Natural killer cell (primary cell): ENCODE measurements at regions of chr6 and their contacts with region 1.

Region 1: DNA sequence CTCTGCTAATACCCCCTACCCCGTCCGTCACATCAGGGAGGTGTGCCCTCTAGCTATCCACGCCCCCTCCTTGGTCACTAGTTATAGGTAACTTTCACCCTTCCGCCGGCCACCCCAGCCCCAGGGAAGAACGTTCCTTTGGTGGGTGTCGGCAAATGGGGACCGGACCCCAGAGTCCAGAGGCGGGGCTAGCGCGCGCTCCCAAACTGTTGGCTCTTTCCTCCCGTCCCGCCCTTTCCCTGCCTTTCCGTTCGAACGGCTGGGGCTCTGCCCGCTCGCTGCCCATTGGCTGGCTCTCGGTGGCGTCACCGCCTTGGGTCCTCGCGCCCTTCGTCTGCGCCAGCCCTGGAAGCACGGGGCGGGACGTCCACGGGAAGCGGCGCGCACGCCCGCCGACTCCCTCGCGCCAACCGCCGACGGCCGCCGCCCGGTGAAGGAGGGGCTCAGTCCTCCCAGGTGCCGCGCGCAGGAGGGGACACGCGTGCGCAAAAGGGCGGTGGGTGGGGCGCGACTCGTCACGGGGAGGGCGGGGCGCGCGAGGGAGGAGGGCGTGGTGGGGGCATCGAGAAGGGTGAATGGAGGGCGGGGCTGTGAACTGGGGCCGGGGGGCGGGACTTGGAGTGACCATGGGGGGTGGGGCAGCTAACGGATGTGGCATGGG is 634 bp upstream of the PHF1 start:
- DNase-seq: peak; percentile 95 to 98
- ATAC-seq: peak; percentile 69 to 86 (median 74)
- H3K4me3 ChIP-seq: peak overlapping the region; percentile 84
- H3K4me3 Mint-ChIP-seq: peak overlapping the region; percentile 92
- H3K27ac ChIP-seq: peak overlapping the region; percentile 98
- H3K27ac Mint-ChIP-seq: peak overlapping the region; percentile 100
- H3K4me1 ChIP-seq: peaks cover 54% of the 10 kb centered on the region
- H3K4me1 Mint-ChIP-seq: peaks cover 38 to 48% of the 10 kb centered on the region in 2 donors
- H3K27me3 ChIP-seq: no peaks in the 10 kb centered on the region
- H3K27me3 Mint-ChIP-seq: no peaks in the 10 kb centered on the region
- CTCF ChIP-seq: no peak

Region 2: GRCh38 chr6:33323623-33323948 is 86.6 kb before region 1 on chr6:
- intact Hi-C with region 1: loop called (anchors 1 kb)
- DNase-seq: no peak
- ATAC-seq: no peak
- H3K4me3 ChIP-seq: peak overlapping the region; percentile 67
- H3K4me3 Mint-ChIP-seq: peak overlapping the region; percentile 99
- H3K27ac ChIP-seq: peak overlapping the region; percentile 85
- H3K27ac Mint-ChIP-seq: peak overlapping the region; percentile 98
- H3K4me1 ChIP-seq: peaks cover 46% of the 10 kb centered on the region
- H3K4me1 Mint-ChIP-seq: peaks cover 50 to 57% of the 10 kb centered on the region in 2 donors
- H3K27me3 ChIP-seq: no peaks in the 10 kb centered on the region
- H3K27me3 Mint-ChIP-seq: no peaks in the 10 kb centered on the region
- CTCF ChIP-seq: no peak

Region 3: DNA sequence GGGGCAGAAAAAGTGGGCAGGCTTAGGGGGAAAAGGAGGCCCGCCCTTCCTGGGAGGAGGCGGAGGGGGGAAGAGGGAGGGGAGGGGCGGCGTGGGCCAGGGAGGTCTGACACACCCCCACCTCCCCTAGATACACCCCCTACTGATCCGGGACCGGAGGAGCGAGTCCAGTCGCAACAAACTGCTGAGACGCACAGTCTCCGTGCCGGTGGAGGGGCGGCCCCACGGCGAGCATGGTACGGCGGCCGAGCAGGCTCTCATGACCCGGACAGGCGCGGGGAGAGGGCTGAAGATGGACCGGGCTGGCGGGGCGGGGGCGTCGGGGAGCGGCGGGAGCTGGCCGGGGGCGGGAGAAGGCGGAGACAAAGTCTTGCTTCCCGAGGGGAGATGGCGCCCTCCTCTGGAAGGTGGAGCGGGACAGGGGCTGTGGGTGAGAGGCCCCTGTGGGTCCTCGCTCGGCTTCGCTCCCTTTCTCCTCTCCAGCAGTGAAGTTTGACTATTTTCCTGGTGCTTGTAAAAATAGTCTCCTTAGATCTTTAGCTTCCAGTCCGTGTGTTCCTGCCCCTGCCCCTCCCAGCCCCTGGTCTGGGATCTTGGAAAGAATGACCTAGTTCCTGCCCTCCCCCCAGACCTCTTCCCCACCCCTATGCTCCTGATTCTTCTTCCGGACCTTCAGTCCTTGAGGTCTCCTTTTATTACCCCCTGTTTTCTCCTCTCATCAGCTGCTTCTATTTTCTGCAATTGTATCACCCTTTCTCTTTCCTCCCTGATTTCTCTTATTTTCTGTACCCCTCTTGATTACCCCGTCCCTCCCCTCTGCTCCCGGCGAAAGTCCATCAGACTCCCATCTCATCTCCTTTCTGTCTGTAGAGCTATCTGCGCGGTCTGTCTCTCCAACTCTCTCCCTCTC is 15.7 kb after region 1 on chr6:
- intact Hi-C with region 1: loop called (anchors 2 kb)
- DNase-seq: peak; percentile 69 to 89
- ATAC-seq: peak; percentile 50 to 76 (median 67)
- H3K4me3 ChIP-seq: peak overlapping the region; percentile 66
- H3K4me3 Mint-ChIP-seq: peak overlapping the region; percentile 90
- H3K27ac ChIP-seq: peak overlapping the region; percentile 89
- H3K27ac Mint-ChIP-seq: peak overlapping the region; percentile 88 to 92
- H3K4me1 ChIP-seq: peaks cover 59% of the 10 kb centered on the region
- H3K4me1 Mint-ChIP-seq: peaks cover 59 to 77% of the 10 kb centered on the region in 2 donors
- H3K27me3 ChIP-seq: no peaks in the 10 kb centered on the region
- H3K27me3 Mint-ChIP-seq: no peaks in the 10 kb centered on the region
- CTCF ChIP-seq: peak; percentile 42

Region 4: GRCh38 chr6:33570806-33571636 is 160.8 kb after region 1 on chr6:
- intact Hi-C with region 1: loop called (anchors 1 kb)
- DNase-seq: peak; percentile 83 to 97
- ATAC-seq: peak; percentile 85 to 94 (median 85)
- H3K4me3 ChIP-seq: peak overlapping the region; percentile 75
- H3K4me3 Mint-ChIP-seq: peak overlapping the region; percentile 94
- H3K27ac ChIP-seq: peak overlapping the region; percentile 93
- H3K27ac Mint-ChIP-seq: peak overlapping the region; percentile 99 to 100
- H3K4me1 ChIP-seq: peaks cover 24% of the 10 kb centered on the region
- H3K4me1 Mint-ChIP-seq: peaks cover 20 to 27% of the 10 kb centered on the region in 2 donors
- H3K27me3 ChIP-seq: no peaks in the 10 kb centered on the region
- H3K27me3 Mint-ChIP-seq: no peaks in the 10 kb centered on the region
- CTCF ChIP-seq: no peak